Activated naive CD8-positive, alpha-beta T cell treated with anti-CD3 and anti-CD28 coated beads, Interleukin-2, amount 10 ng/mL, durations not matched to agents 7 days and 5 days (primary cell): ENCODE measurements at regions of chr16 and their contacts with region 1.

Region 1: DNA sequence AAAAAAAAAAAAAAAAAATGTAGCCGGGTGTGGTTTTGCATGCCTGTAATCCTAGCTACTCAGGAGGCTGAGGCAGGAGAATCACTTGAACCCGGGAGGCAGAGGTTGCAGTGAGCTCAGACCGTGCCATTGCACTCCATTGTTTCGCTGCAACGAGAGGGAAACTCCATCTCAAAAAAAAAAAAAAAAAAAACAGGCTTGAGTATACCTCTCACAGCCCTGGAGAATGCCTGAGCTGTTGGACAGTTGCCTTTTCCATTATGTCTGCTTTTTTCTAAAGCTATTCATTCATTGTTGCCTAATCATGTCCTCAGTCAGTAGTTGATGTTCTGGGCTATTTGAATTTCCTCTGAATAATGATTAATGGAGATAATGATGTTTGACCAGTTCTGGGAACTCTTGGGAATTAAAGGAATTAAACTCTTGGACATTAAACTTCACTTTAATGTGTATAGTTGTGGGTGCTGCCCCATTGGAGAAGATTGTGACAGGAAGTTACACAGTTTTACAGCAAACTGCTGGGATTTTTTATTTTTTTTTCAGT is 11.8 kb downstream of the HMOX2 start:
- DNase-seq: no peak
- ATAC-seq: peak; percentile 52
- H3K4me3 Mint-ChIP-seq: peak overlapping the region; percentile 84
- H3K27ac Mint-ChIP-seq: peak overlapping the region; percentile 97
- H3K4me1 Mint-ChIP-seq: peaks cover 41% of the 10 kb centered on the region
- H3K27me3 Mint-ChIP-seq: no peaks in the 10 kb centered on the region

Region 2: DNA sequence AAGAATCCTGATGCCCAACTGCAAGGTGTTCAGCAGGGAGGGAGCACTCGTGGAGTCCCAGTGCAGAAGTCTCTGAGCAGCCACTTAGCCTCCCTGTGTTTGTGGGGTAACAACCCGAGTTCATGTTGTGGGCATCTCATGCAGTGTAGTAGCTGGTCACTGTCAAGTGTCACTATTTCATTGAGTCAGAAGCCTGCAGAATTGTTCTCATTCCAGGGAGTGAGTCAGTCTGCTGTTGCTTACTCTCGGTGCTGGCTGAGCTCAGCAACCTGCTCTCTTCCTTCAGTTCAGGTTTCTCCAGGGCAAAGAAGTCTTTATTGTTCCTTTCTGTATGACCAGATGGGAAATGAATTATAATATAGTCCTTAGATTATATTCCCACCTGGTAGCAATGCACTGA is 12.2 kb after region 1 on chr16:
- POLR2A ChIA-PET with region 1: interaction called, 66 read pairs
- DNase-seq: no peak
- ATAC-seq: no peak
- H3K4me3 Mint-ChIP-seq: no peak overlapping the region
- H3K27ac Mint-ChIP-seq: peak overlapping the region; percentile 4
- H3K4me1 Mint-ChIP-seq: peaks cover 66% of the 10 kb centered on the region
- H3K27me3 Mint-ChIP-seq: no peaks in the 10 kb centered on the region

Region 3: GRCh38 chr16:4556112-4556511 is 68.1 kb after region 1 on chr16 and contains the start of gene C16orf96:
- POLR2A ChIA-PET with region 1: no interaction called
- DNase-seq: no peak
- ATAC-seq: no peak
- H3K4me3 Mint-ChIP-seq: no peak within 1 kb of the TSS
- H3K27ac Mint-ChIP-seq: no peak within 1 kb of the TSS
- H3K4me1 Mint-ChIP-seq: no peaks in the 10 kb centered on the region
- H3K27me3 Mint-ChIP-seq: peaks cover 10% of the 10 kb centered on the region
- total RNA-seq, gene C16orf96: 0.08 to 0.17 TPM